ENCODE measurements at regions of chr10 and their contacts with region 1.

Region 1: DNA sequence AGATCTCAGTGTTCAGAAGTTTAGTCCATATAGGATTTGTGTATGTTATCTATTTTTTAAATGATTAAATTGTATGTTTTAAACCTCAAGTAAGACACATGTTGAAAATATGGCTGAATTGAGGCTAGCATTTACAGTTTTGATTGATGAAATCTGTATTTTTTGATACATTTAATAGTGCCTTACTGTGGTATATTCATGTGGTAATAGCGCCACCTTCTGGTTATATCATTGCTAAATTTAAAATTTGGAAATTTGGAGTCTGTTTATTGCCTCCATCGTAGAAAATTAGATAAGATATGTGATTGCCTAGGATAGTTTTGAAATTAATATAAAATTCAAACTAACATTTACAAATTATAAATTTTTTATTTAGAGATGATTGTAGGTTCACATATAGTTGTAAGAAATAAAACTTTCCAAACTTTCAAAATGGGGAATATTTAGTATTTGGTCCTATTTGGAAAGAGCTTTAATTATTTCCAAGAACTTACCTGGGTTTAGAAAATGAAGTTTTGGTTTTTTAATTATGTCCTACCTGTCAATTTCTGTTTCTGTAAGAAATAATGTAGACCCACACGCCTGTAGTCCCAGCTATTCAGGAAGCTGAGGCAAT is 19.1 kb upstream of the ARMS2 start:
- DNase-seq: peak; percentile 66
- ATAC-seq: no peak
- H3K4me3 ChIP-seq: no peak overlapping the region
- H3K4me3 Mint-ChIP-seq: no peak overlapping the region
- H3K27ac ChIP-seq: no peak overlapping the region
- H3K27ac Mint-ChIP-seq: no peak overlapping the region
- H3K4me1 ChIP-seq: no peaks in the 10 kb centered on the region
- H3K4me1 Mint-ChIP-seq: peaks cover 3% of the 10 kb centered on the region
- H3K27me3 ChIP-seq: no peaks in the 10 kb centered on the region
- H3K27me3 Mint-ChIP-seq: no peaks in the 10 kb centered on the region
- CTCF ChIP-seq: peak; percentile 88

Region 2: DNA sequence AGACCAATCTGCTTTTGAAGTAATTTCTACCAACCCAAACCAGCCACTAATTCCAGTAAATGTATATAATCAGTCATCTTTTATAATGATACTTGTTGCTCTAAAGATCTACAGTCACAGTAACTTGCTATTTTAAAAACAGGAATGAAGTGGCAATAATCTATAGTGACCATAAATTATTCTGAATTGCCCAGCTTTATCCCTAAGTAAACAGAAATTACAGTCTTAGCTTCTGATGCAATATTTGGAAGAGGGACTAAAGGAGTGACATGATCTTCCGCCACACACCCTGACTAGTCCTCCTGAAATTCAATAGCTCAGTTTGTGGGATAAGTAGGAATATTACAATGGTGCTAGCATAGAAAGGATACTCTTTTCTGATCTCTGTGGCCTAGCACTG is 603.5 kb before region 1 on chr10:
- CTCF ChIA-PET with region 1: no interaction called
- POLR2A ChIA-PET with region 1: no interaction called
- intact Hi-C with region 1: no loop called
- DNase-seq: no peak
- ATAC-seq: no peak
- H3K4me3 ChIP-seq: no peak overlapping the region
- H3K4me3 Mint-ChIP-seq: no peak overlapping the region
- H3K27ac ChIP-seq: no peak overlapping the region
- H3K27ac Mint-ChIP-seq: no peak overlapping the region
- H3K4me1 ChIP-seq: no peaks in the 10 kb centered on the region
- H3K4me1 Mint-ChIP-seq: peaks cover 8% of the 10 kb centered on the region
- H3K27me3 ChIP-seq: no peaks in the 10 kb centered on the region
- H3K27me3 Mint-ChIP-seq: no peaks in the 10 kb centered on the region
- CTCF ChIP-seq: no peak

Region 3: DNA sequence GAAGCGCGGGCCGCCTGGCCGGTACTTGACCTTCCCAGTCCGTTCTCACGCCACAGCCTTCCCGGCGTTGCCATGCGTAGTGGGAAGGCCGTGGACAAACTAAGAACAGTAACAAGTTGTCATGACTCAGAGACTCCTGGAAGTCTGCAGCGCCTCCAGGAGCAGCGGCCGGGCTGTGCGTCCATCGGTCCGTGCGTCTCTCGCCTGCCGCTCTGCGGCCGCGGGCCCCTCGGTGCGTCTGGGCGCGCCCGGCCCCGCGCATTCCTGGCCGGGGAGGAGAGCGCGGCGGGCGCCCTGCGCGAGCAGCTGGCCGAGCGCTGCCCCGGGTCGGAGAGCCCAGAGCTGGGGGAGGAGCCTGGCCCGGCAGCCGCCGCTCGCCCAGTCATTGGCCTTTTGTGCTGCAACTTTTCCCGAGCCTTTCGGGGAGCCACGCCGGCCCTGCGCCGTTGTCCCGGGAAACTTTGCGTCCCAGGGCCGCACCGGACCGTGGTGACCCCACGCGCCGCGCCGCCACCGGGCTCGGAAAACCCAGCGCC is 322.6 kb before region 1 on chr10:
- CTCF ChIA-PET with region 1: no interaction called
- POLR2A ChIA-PET with region 1: no interaction called
- intact Hi-C with region 1: no loop called
- DNase-seq: no peak
- ATAC-seq: no peak
- H3K4me3 ChIP-seq: no peak overlapping the region
- H3K4me3 Mint-ChIP-seq: no peak overlapping the region
- H3K27ac ChIP-seq: no peak overlapping the region
- H3K27ac Mint-ChIP-seq: no peak overlapping the region
- H3K4me1 ChIP-seq: no peaks in the 10 kb centered on the region
- H3K4me1 Mint-ChIP-seq: no peaks in the 10 kb centered on the region
- H3K27me3 ChIP-seq: peaks cover 0 to 31% (median 6%) of the 10 kb centered on the region in 4 experiments
- H3K27me3 Mint-ChIP-seq: peaks cover 58% of the 10 kb centered on the region
- CTCF ChIP-seq: no peak

Region 4: DNA sequence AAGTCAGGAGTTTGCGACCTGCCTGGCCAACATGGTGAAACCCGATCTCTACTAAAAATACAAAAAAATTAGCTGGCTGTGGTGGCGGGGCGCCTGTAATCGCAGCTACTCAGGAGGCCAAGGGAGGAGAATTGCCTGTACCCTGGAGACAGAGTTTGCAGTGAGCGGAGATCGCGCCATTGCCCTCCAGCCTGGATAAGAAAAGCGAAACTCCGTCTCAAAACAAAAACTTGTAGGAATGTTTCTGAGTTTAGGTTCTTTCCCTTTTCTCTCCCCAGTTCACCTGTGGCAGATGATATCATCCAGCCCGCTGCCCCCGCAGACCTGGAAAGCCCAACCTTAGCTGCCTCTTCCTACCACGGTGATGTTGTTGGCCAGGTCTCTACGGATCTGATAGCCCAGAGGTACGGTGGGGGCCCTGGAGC is 303.0 kb before region 1 on chr10:
- CTCF ChIA-PET with region 1: no interaction called
- POLR2A ChIA-PET with region 1: no interaction called
- intact Hi-C with region 1: no loop called
- DNase-seq: no peak
- ATAC-seq: no peak
- H3K4me3 ChIP-seq: no peak overlapping the region
- H3K4me3 Mint-ChIP-seq: no peak overlapping the region
- H3K27ac ChIP-seq: no peak overlapping the region
- H3K27ac Mint-ChIP-seq: no peak overlapping the region
- H3K4me1 ChIP-seq: no peaks in the 10 kb centered on the region
- H3K4me1 Mint-ChIP-seq: peaks cover 7% of the 10 kb centered on the region
- H3K27me3 ChIP-seq: no peaks in the 10 kb centered on the region
- H3K27me3 Mint-ChIP-seq: peaks cover 24% of the 10 kb centered on the region
- CTCF ChIP-seq: no peak

Region 5: GRCh38 chr10:122298598-122299301 is 136.6 kb before region 1 on chr10:
- CTCF ChIA-PET with region 1: interaction called, 138 read pairs
- POLR2A ChIA-PET with region 1: no interaction called
- intact Hi-C with region 1: loop called (anchors 1 kb)
- DNase-seq: peak; percentile 75
- ATAC-seq: peak; percentile 88
- H3K4me3 ChIP-seq: no peak overlapping the region
- H3K4me3 Mint-ChIP-seq: no peak overlapping the region
- H3K27ac ChIP-seq: no peak overlapping the region
- H3K27ac Mint-ChIP-seq: no peak overlapping the region
- H3K4me1 ChIP-seq: peaks cover 3 to 4% of the 10 kb centered on the region in 2 donors
- H3K4me1 Mint-ChIP-seq: peaks cover 3% of the 10 kb centered on the region
- H3K27me3 ChIP-seq: peaks cover 0 to 4% (median 0%) of the 10 kb centered on the region in 4 experiments
- H3K27me3 Mint-ChIP-seq: peaks cover 20% of the 10 kb centered on the region
- CTCF ChIP-seq: peak; percentile 91

Region 6: DNA sequence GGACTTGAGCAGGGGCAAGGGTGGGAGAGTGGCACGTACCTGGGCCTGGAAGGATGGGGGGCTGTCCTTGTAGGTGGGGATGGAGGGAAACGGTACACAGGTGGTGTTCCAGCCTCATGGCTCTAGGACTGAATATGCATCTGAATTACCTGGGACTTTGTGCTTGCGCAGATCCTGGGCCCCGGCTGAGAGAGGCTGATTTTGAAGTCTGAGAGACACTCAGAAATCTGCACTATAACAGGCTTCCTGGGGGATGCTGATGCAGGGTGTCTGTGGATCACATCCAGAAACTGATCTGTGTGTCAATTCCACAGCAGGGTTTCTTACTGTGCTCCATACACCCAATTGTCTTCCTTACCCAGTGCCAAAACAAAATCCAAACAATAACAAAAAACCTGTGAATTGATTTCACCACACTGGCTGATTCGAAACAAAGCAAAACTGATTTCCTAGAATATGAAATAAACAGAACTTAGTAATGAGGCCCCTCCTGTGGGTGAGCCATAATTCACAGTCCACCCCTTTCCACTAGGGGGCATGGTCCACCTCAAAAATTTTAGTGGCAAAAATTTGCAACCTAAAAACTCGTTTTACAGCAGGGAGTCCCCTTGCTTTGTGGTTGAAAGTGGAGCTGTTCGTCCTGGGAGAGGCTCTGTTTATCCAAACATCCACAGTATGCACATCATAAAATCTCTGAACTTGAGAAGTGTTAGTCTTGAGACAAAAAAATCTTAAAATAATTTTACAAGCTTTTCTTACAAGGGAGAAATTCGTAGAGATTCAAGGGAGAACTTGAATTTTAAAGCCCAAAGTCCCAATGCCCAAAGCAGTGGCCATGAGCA is 92.8 kb before region 1 on chr10:
- CTCF ChIA-PET with region 1: interaction called, 114 read pairs
- POLR2A ChIA-PET with region 1: no interaction called
- intact Hi-C with region 1: loop called (anchors 1 kb)
- DNase-seq: peak; percentile 65
- ATAC-seq: peak; percentile 47
- H3K4me3 ChIP-seq: no peak overlapping the region
- H3K4me3 Mint-ChIP-seq: no peak overlapping the region
- H3K27ac ChIP-seq: no peak overlapping the region
- H3K27ac Mint-ChIP-seq: no peak overlapping the region
- H3K4me1 ChIP-seq: peaks cover 8 to 9% of the 10 kb centered on the region in 2 donors
- H3K4me1 Mint-ChIP-seq: peaks cover 11% of the 10 kb centered on the region
- H3K27me3 ChIP-seq: peaks cover 0 to 3% (median 1%) of the 10 kb centered on the region in 4 experiments
- H3K27me3 Mint-ChIP-seq: peaks cover 20% of the 10 kb centered on the region
- CTCF ChIP-seq: peak; percentile 82

Region 7: DNA sequence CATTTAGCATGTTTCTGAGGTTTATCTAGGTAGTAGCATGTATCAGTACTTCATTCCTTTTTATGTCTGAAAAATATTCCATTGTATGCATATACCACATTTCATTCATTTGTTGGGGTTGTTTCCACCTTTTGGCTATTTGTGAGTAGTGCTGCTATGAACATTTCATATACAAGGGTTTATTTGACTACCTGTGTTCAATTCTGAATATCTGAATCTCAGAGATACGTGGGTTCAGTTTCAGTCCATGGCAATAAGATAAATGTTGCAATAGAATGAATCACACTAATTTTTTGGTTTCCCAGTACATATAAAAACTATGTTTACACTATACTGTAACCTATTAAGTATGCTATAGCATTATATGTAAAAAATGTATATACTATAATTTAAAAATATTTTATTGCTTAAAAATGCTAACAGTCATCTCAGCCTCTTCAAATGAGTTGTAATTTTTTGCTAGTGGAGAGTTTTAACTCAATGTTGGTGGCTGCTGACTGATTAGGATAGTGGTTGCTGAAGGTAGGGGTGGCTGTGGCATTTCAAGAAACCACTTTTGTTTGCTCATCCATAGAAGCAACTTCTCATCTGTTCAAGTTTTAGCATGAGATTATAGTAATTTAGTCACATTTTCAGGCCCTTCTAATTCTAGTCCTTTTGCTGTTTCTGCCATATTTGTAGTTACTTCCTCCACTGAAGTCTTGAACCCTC is 46.9 kb before region 1 on chr10:
- CTCF ChIA-PET with region 1: interaction called, 11 read pairs
- POLR2A ChIA-PET with region 1: no interaction called
- intact Hi-C with region 1: no loop called
- DNase-seq: no peak
- ATAC-seq: no peak
- H3K4me3 ChIP-seq: no peak overlapping the region
- H3K4me3 Mint-ChIP-seq: no peak overlapping the region
- H3K27ac ChIP-seq: no peak overlapping the region
- H3K27ac Mint-ChIP-seq: no peak overlapping the region
- H3K4me1 ChIP-seq: peaks cover 10 to 31% of the 10 kb centered on the region in 2 donors
- H3K4me1 Mint-ChIP-seq: peaks cover 51% of the 10 kb centered on the region
- H3K27me3 ChIP-seq: no peaks in the 10 kb centered on the region
- H3K27me3 Mint-ChIP-seq: no peaks in the 10 kb centered on the region
- CTCF ChIP-seq: no peak

Measured in B cell (primary cell).